Mammary epithelial cell (primary cell): ENCODE measurements at regions of chr6 and their contacts with region 1.

Region 1: GRCh38 chr6:31702819-31703522 is at the start of gene ABHD16A:
- DNase-seq: peak; percentile 97
- H3K4me3 ChIP-seq: peak within 1 kb of the TSS; percentile 70 to 91 (median 80)
- H3K27ac ChIP-seq: peak within 1 kb of the TSS; percentile 75
- H3K4me1 ChIP-seq: peaks cover 12% of the 10 kb centered on the region
- H3K27me3 ChIP-seq: no peaks in the 10 kb centered on the region
- CTCF ChIP-seq: no peak
- total RNA-seq, gene ABHD16A: 24.2 to 24.8 TPM

Region 2: DNA sequence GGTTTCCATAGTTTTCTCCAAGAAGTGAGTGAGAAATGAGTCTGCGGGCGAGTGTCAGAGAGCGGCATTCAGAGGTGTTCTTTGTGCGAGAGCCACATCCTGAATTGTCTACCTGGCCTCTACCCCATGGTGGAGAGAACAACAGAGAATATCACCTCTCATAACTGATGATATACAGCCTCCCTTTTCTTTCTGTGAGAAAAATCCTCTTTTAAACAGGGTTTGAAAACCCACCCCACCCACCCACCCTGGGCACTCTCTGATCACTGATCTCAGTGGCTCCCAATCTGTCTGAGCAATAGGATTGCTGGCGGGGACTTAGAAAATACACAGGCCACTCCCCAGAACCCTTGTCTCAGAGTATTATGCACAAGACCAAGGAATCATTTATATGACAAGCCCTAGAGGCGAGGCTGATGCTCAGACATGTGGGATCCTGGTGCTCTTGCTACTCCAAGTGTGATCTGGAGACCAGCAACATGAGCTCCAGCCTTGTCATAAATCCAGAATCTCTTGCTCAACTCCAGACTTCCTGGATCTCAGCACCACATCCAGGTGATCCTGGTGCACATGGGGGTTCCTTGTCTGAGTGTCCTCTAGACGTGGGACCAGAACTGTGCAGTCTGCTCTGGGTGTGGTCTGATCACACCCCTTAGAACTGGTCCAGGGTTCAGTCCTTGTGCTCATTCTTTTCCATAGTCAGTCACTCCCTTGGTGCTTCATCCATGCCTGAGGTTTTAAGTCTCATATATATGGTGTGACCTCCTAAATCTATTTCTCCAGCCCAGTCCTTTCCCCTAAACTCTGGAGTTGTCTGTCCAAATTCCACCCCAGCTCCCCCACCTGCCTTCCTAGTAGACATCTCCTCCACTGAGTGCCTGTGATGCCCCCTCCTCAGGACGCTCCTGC is 351.3 kb before region 1 on chr6:
- CTCF ChIA-PET with region 1: no interaction called
- dilution Hi-C with region 1: no loop called
- in situ Hi-C with region 1: no loop called
- intact Hi-C with region 1: no loop called
- DNase-seq: no peak
- H3K4me3 ChIP-seq: no peak overlapping the region
- H3K27ac ChIP-seq: no peak overlapping the region
- H3K4me1 ChIP-seq: no peaks in the 10 kb centered on the region
- H3K27me3 ChIP-seq: no peaks in the 10 kb centered on the region
- CTCF ChIP-seq: no peak

Region 3: GRCh38 chr6:31441365-31442267 is 261.4 kb before region 1 on chr6:
- CTCF ChIA-PET with region 1: no interaction called
- dilution Hi-C with region 1: no loop called
- in situ Hi-C with region 1: no loop called
- intact Hi-C with region 1: no loop called
- DNase-seq: peak; percentile 32
- H3K4me3 ChIP-seq: peak overlapping the region in 1 of 3 experiments; percentile 35
- H3K27ac ChIP-seq: no peak overlapping the region
- H3K4me1 ChIP-seq: no peaks in the 10 kb centered on the region
- H3K27me3 ChIP-seq: peaks cover 3% of the 10 kb centered on the region
- CTCF ChIP-seq: peak; percentile 65 to 92

Region 4: GRCh38 chr6:31729515-31729978 is 26.6 kb after region 1 on chr6:
- CTCF ChIA-PET with region 1: interaction called, 27 read pairs
- dilution Hi-C with region 1: no loop called
- in situ Hi-C with region 1: no loop called
- intact Hi-C with region 1: loop called (anchors 2 kb)
- DNase-seq: peak; percentile 80
- H3K4me3 ChIP-seq: peak overlapping the region; percentile 43 to 71 (median 46)
- H3K27ac ChIP-seq: no peak overlapping the region
- H3K4me1 ChIP-seq: peaks cover 24% of the 10 kb centered on the region
- H3K27me3 ChIP-seq: no peaks in the 10 kb centered on the region
- CTCF ChIP-seq: no peak

Region 5: GRCh38 chr6:31752739-31753319 is 49.9 kb after region 1 on chr6:
- CTCF ChIA-PET with region 1: no interaction called
- dilution Hi-C with region 1: no loop called
- in situ Hi-C with region 1: no loop called
- intact Hi-C with region 1: loop called (anchors 5 kb)
- DNase-seq: peak; percentile 52
- H3K4me3 ChIP-seq: no peak overlapping the region
- H3K27ac ChIP-seq: no peak overlapping the region
- H3K4me1 ChIP-seq: no peaks in the 10 kb centered on the region
- H3K27me3 ChIP-seq: no peaks in the 10 kb centered on the region
- CTCF ChIP-seq: no peak

Region 6: DNA sequence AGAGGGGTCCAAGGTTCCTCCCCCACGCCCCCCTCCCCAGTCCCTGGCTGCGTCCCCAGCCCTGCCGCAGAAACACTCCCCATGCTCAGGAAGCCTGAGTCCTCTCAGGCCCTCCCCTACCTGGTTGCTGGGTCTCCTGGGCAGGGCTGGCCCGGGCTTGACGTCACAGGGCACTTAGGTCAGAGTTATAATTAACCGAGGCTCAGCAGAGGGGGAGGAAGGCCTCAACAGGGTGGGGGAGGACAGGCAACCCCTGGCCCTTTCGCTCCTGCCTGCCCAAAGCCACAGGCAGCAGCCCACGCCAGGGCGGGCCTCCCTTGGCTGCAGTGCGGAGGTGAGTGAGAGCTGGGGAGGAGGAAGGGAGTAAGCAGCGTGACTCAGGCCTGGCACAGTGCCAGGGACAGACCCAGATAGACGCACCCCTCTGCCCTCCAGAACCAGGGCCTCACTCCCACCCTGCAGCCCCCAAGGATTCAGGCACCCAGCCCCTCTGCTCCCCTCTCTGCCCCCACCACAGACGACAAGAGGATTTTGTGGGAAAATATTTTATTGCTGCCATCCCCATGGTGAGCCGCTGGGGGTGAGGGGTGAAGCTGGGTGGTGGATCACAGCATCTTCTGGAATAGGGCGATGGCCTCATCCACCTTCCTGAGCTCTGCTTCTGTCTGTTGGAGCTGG is 74.2 kb after region 1 on chr6 and contains the start of gene VWA7:
- CTCF ChIA-PET with region 1: interaction called, 16 read pairs
- dilution Hi-C with region 1: no loop called
- in situ Hi-C with region 1: no loop called
- intact Hi-C with region 1: no loop called
- DNase-seq: peak; percentile 91
- H3K4me3 ChIP-seq: peak within 1 kb of the TSS in 2 of 3 experiments; percentile 3 to 26
- H3K27ac ChIP-seq: peak within 1 kb of the TSS; percentile 44
- H3K4me1 ChIP-seq: peaks cover 26% of the 10 kb centered on the region
- H3K27me3 ChIP-seq: no peaks in the 10 kb centered on the region
- CTCF ChIP-seq: no peak
- total RNA-seq, gene VWA7: 1.2 to 1.5 TPM

Region 7: GRCh38 chr6:31815025-31815838 is 112.3 kb after region 1 on chr6 and contains the starts of genes HSPA1A and HSPA1L:
- CTCF ChIA-PET with region 1: interaction called, 15 read pairs
- dilution Hi-C with region 1: no loop called
- in situ Hi-C with region 1: no loop called
- intact Hi-C with region 1: no loop called
- DNase-seq: peak; percentile 95
- H3K4me3 ChIP-seq: peak within 1 kb of the TSS; percentile 53 to 85 (median 75)
- H3K27ac ChIP-seq: peak within 1 kb of the TSS; percentile 81
- H3K4me1 ChIP-seq: peaks cover 15% of the 10 kb centered on the region
- H3K27me3 ChIP-seq: no peaks in the 10 kb centered on the region
- CTCF ChIP-seq: no peak
- total RNA-seq, gene HSPA1A: 67.8 to 99.5 TPM
- total RNA-seq, gene HSPA1L: 0.42 to 0.83 TPM